AG04449 (cell line): ENCODE measurements at regions of chr11 and their contacts with region 1.

Region 1: DNA sequence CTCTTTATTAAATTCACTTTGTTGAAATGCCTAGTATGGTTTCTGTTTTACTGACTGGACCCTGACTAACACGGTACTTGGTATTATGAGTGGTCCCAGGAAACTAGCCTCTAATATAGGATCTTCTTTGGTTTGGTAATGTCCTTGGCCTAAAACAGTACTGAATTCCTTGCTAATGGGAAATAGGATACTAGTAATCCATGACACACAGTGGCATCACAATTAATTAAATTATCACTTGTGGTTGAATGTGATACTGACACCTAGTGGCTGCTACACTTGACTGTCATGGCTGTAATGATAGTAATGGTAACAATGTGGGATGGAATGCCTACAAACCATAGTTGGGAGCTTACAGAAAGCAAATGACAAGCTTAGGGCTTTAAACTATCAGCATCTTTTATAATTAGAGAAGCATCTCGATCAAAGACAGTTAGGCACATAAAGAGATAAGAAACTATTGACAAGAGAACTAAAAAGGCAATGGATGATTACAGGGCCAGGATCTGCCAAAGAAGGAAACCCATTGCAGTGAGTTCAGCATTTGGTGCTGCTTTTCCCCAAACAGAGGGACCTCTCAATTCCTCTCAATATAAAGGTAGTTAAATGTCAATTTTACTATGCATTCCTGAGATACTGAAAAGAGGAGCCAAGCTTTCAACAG is 8.6 kb downstream of the DNHD1 start:
- DNase-seq: peak; percentile 36
- H3K4me3 ChIP-seq: no peak overlapping the region
- CTCF ChIP-seq: peak; percentile 46

Region 2: GRCh38 chr11:6523253-6523652 is 17.5 kb after region 1 on chr11:
- CTCF ChIA-PET with region 1: interaction called, 17 read pairs
- POLR2A ChIA-PET with region 1: no interaction called
- DNase-seq: no peak
- H3K4me3 ChIP-seq: no peak overlapping the region
- CTCF ChIP-seq: no peak

Region 3: GRCh38 chr11:6576471-6577373 is 71.0 kb after region 1 on chr11:
- CTCF ChIA-PET with region 1: no interaction called
- POLR2A ChIA-PET with region 1: no interaction called
- DNase-seq: no peak
- H3K4me3 ChIP-seq: no peak overlapping the region
- CTCF ChIP-seq: no peak